ENCODE measurements at regions of chr2 and their contacts with region 1.

Region 1: DNA sequence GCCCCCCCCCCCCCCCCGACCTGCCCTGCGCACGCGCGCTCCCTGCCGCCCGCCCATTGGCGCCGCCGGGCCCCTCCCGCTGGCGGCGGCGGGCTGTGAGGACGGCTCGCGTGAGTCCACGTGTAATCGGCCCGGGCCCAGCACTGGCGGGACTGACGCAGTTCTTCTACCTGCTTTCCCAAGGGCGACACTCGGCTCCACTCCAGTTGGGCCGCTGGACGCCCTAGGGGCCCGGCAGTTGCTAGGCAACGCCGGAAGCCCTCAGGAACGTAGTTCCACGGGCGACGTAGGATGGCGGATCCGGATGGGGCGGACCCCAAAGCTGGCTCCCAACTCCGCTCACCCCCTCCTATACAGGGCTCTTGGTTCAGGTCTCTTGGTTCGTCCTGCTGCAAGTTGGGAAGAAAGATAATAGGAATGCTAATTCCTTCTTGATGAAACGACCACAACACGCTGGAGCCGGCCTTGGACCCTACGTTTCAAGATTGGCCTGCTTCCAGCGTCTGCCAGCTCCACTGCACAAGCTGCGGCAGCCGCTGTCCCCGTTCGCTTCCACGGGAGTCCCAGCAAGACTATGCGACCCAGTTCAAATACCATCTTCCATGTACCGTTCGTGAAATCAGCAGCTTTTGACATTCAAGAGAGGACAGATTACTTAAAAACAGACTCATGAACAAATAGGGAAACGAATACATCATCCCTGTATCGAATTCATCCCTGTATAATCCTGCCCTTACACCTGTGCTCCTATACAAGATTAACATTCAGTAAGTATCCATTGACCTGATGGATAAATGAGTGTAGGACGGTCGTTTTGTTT is 415 bp upstream of the MCFD2 start:
- H3K4me3 Mint-ChIP-seq: peak overlapping the region; percentile 91
- H3K27ac Mint-ChIP-seq: peak overlapping the region; percentile 85
- H3K4me1 Mint-ChIP-seq: peaks cover 35% of the 10 kb centered on the region
- H3K27me3 Mint-ChIP-seq: no peaks in the 10 kb centered on the region

Region 2: GRCh38 chr2:46942139-46942517 is 26.1 kb after region 1 on chr2:
- intact Hi-C with region 1: loop called (anchors 2 kb)
- H3K4me3 Mint-ChIP-seq: peak overlapping the region; percentile 99
- H3K27ac Mint-ChIP-seq: peak overlapping the region; percentile 88
- H3K4me1 Mint-ChIP-seq: peaks cover 69% of the 10 kb centered on the region
- H3K27me3 Mint-ChIP-seq: no peaks in the 10 kb centered on the region